ENCODE measurements at regions of chr1 and their contacts with region 1.

Region 1: DNA sequence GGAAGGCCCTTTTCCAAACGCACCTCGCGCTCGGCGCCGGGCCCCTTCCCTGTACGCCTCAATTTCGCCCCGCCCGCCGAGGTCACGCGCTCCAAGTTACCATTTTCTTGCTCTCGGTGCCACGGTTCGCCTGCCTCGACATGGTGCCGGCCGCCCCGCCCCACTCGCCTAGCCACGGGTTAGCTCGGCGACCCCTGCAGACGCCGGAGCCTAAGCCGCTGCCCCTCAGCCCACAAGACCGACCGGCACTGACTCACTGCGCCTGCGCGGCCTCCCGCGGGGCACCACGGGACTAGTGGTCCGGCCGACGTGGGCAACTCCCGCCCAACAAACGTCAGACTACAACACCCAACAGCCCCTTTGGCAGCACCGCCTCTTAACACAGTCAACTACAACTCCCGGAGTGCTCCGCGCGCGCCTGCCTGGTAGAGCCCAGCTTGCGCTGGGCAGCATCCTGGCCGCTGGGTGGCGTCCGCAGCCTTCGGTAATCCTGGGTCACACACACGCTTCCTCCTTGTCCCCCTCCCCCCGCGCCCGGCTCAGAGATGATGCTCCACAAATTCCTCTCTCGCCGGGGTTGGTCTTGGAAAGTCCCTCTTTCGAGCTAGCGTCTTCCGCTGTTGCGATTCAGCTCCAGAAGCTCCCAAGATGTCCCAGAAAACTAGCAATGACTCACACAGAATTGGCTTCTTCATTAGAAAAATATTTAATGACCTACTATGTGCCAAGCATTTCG is at the start of gene TRAPPC3:
- DNase-seq: peak; percentile 100
- H3K4me3 ChIP-seq: peak within 1 kb of the TSS; percentile 71 to 87 (median 84)
- H3K27ac ChIP-seq: peak within 1 kb of the TSS; percentile 93 to 98 (median 96)
- H3K4me1 ChIP-seq: peaks cover 42 to 71% (median 62%) of the 10 kb centered on the region in 4 donors
- H3K27me3 ChIP-seq: no peaks in the 10 kb centered on the region
- CTCF ChIP-seq: peak in 2 of 3 experiments; percentile 98 to 99
- EP300 ChIP-seq: no peak
- POLR2A ChIP-seq: peak; percentile 91
- total RNA-seq, gene TRAPPC3: 97.9 to 164 (median 122) TPM

Region 2: DNA sequence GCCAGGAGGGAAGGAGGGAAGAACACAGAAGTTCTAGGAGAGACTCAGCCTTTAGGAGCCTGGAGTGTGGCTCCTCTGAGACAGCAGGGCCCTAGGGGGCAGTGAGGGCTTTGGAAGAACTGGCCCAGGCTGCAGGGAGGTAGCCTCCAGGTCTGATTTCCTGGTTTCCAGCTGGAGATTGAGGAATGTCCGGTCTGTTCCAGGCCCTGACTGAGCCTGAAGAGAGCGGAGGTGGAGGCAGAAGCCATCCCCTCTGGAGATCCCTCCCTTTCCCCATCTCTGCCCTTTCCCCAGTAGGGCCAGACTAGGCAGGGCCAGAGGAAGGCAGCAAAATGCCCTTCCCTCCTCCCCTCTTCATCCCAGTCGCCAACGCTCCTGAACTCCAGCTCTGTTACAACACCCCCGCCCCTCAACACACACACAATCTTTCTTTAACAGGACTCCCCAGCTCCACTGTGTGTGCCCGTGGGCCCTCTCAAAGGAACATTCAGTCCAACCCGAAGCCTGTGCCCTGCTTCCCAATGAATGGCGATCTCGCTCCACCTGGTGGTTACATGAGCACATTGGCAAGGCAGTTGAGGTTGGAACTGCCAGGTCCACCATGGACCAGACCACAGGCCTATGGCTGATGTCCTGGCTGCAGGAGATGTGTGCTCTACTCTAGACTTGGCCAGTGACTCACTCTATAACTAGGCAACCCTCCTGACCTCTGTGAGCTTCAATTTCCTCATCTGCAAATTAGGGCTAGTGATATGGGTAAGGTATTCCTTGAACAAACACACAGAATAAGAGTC is 38.6 kb after region 1 on chr1:
- intact Hi-C with region 1: loop called (anchors 2 kb)
- DNase-seq: peak; percentile 97
- H3K4me3 ChIP-seq: no peak overlapping the region
- H3K27ac ChIP-seq: peak overlapping the region; percentile 87 to 90 (median 88)
- H3K4me1 ChIP-seq: peaks cover 11 to 36% (median 27%) of the 10 kb centered on the region in 4 donors
- H3K27me3 ChIP-seq: no peaks in the 10 kb centered on the region
- CTCF ChIP-seq: peak; percentile 90 to 95 (median 93)
- EP300 ChIP-seq: no peak
- POLR2A ChIP-seq: no peak

Region 3: GRCh38 chr1:36285448-36286101 is 136.2 kb after region 1 on chr1:
- intact Hi-C with region 1: loop called (anchors 5 kb)
- DNase-seq: no peak
- H3K4me3 ChIP-seq: no peak overlapping the region
- H3K27ac ChIP-seq: peak overlapping the region; percentile 55 to 71 (median 64)
- H3K4me1 ChIP-seq: peaks cover 32 to 60% (median 60%) of the 10 kb centered on the region in 4 donors
- H3K27me3 ChIP-seq: no peaks in the 10 kb centered on the region
- CTCF ChIP-seq: peak; percentile 73 to 83 (median 80)
- EP300 ChIP-seq: no peak
- POLR2A ChIP-seq: no peak

Region 4: DNA sequence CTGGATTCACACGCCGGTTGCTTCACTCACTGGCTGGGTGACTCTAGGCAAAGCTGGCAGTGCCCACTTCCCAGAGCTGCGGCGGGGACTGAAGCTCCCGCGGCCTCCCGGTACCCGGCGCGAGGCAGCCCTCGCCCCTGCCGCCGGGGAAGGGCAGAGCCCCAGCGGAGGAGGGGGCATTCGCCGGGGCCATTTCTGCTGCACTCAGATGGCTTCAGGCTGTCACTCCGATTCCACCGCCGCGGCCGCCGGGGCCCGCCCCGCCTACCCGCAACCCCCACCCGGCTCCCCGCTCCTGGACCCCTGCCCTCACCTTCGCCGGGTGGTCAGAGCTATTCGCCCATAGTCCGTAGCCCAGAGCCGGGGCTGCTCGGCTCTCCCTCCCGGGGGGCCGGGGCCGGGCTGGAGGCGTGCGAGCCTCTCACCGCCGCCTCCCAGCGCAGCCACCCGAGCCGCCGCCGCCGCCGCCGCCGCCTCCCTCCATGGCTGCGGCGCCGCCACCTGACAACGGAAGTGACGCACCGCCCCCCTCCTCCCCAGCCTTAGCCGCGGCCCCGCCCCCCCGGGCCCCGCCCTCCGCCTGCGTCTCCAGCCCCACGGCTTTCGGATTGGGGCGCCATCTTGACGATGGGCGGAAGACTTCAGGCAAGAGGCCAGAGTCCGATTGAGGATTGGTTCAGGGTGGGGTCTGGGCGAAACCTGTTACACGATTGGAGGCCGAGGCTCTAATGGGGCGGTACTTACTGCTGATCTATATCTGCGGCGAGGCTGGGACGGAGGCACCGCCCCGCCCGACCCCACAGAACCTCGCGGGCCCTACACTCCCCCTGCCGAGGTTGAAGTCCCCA is 236.2 kb after region 1 on chr1 and contains the start of gene STK40:
- intact Hi-C with region 1: loop called (anchors 10 kb)
- DNase-seq: peak; percentile 99
- H3K4me3 ChIP-seq: peak within 1 kb of the TSS; percentile 79 to 99 (median 88)
- H3K27ac ChIP-seq: peak within 1 kb of the TSS; percentile 93 to 99 (median 97)
- H3K4me1 ChIP-seq: peaks cover 56 to 86% (median 80%) of the 10 kb centered on the region in 4 donors
- H3K27me3 ChIP-seq: no peaks in the 10 kb centered on the region
- CTCF ChIP-seq: no peak
- EP300 ChIP-seq: no peak
- POLR2A ChIP-seq: peak; percentile 89
- total RNA-seq, gene STK40: 67.7 to 103 (median 80.2) TPM